Right ventricle myocardium inferior (tissue), 1 donor: ENCODE measurements at regions of chr2 and their contacts with region 1.

Region 1: GRCh38 chr2:27804146-27804545 is 32.6 kb downstream of the MRPL33 start:
- DNase-seq: no peak
- ATAC-seq: no peak

Region 2: GRCh38 chr2:27765621-27766269 is 38.4 kb before region 1 on chr2:
- intact Hi-C with region 1: loop called (anchors 5 kb)
- DNase-seq: peak; percentile 73
- ATAC-seq: peak; percentile 62